ENCODE measurements at regions of chr2 and their contacts with region 1.

Region 1: DNA sequence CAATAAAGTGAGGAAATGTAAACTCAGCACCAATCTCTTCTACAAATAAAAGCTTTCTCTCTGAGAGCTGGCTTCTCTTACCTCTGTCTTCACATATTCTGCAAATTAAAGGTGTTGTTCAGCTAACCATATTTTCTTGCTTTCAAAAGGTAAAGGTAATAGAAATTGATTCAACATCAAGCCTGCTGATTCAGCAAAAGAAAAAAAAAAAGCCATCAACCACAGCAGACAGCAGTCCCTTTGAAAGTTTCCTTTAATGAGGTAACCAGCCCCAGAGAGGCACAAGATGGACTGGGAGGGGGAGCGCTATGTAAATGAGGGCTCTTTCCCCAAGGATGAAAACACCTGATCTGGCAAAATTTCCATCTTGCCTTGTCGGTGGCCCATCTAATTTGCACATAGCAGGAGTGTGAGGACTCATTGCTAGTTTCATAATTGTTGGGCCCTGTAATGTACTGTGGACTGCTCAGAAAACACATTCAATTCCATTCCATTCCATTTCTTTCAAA is 154.9 kb upstream of the SOX11 start:
- DNase-seq: no peak
- H3K4me3 Mint-ChIP-seq: no peak overlapping the region
- H3K27ac Mint-ChIP-seq: no peak overlapping the region
- H3K4me1 Mint-ChIP-seq: no peaks in the 10 kb centered on the region
- H3K27me3 Mint-ChIP-seq: no peaks in the 10 kb centered on the region
- CTCF ChIP-seq: no peak

Region 2: DNA sequence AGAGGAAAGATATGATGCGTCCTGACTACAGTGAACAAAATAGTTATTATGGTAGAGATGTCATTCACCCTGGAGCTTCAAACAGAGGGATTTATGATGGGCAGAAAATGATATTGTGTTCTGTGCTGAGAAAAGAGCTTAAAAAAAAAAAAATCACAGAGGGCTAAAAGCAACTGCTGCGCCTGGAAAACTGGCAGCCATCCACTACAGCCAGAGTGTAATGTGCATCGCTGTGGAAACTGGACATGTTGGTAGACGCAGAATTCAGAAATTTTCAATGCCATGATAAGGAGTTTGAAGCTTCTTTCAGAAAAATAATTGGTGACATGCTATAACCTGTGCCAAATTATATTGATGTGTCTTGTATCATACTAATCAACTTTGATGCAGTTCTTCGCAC is 32.0 kb after region 1 on chr2:
- CTCF ChIA-PET with region 1: no interaction called
- POLR2A ChIA-PET with region 1: interaction called, 3 read pairs
- intact Hi-C with region 1: loop called (anchors 1 kb)
- DNase-seq: no peak
- H3K4me3 Mint-ChIP-seq: no peak overlapping the region
- H3K27ac Mint-ChIP-seq: no peak overlapping the region
- H3K4me1 Mint-ChIP-seq: no peaks in the 10 kb centered on the region
- H3K27me3 Mint-ChIP-seq: no peaks in the 10 kb centered on the region
- CTCF ChIP-seq: no peak